Ascending aorta (tissue), 2 donors: ENCODE measurements at regions of chr2 and their contacts with region 1.

Region 1: DNA sequence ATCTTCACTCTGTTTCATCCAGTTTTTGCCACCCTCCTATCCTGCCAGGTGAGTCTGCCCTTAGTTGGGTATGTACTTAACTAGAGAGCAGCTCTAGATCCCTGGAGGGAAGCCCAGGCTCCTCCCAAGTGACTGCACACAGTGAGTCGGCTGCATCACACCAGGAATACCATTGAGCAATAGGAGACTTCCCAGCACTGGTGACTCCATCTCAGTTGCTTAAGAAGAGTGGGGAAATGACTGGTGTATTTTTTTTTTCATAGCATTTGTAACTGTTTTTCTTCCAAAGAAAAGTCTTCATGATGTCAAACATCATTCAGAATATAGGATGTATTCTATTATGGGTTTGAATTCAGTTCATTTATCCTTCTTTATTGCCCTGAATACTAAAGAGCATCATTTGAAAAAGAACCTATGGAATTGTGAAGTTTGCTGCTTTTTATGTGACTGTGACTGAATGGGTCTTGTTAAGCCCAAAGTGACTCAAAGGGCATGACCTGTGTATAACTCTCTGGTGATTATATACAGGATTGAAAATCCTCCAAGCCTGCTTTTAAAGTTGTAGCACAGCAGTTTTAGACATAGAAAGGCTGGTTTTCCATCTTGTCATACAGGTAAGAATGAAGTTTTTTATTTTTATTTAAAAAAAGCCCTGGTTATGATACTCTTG is 84.3 kb downstream of the MAP3K20 start:
- DNase-seq: peak; percentile 90 to 98
- H3K4me3 ChIP-seq: no peak overlapping the region
- H3K27ac ChIP-seq: peak overlapping the region; percentile 62 to 79
- H3K4me1 ChIP-seq: peaks cover 6 to 14% of the 10 kb centered on the region in 2 donors
- H3K27me3 ChIP-seq: no peaks in the 10 kb centered on the region
- CTCF ChIP-seq: no peak

Region 2: GRCh38 chr2:173027181-173028128 is 132.5 kb before region 1 on chr2:
- intact Hi-C with region 1: loop called (anchors 1 kb)
- DNase-seq: peak; percentile 53 to 95
- H3K4me3 ChIP-seq: no peak overlapping the region
- H3K27ac ChIP-seq: peak overlapping the region; percentile 65 to 70
- H3K4me1 ChIP-seq: peaks cover 0 to 8% of the 10 kb centered on the region in 2 donors
- H3K27me3 ChIP-seq: no peaks in the 10 kb centered on the region
- CTCF ChIP-seq: peak; percentile 90 to 94 (median 93)

Region 3: DNA sequence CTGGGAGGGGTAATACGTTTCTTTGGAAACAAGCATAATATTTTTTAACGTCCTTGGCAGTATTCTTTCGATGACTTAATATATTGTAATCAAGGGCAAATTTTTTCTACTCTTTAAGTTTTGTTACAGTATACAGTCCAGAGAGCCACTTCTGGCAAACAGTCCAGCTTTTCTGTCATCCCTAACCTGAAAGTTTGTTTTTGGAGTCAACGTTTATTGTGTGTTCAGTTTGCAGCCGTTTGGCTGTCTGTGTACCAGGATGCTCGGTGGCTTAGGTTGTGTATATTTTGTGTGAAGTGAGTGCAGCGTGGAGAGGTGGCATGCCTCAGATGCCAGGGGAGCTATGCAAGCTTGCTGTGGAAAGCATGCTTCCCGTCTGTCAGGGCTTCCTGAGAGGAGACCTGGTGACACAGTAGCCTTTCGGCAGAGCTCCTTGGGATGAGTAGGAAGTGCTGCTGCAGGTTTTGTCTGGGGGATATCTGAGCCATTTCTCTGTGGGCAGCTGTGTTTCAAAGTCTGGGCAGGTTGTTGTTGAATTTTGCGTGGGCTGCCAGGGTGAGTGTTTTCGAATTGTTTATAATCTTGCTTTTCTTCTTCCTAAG is 69.6 kb before region 1 on chr2:
- intact Hi-C with region 1: loop called (anchors 5 kb)
- DNase-seq: no peak
- H3K4me3 ChIP-seq: peak overlapping the region; percentile 18 to 47
- H3K27ac ChIP-seq: peak overlapping the region; percentile 67 to 72
- H3K4me1 ChIP-seq: peaks cover 0 to 19% of the 10 kb centered on the region in 2 donors
- H3K27me3 ChIP-seq: no peaks in the 10 kb centered on the region
- CTCF ChIP-seq: no peak

Region 4: GRCh38 chr2:173184031-173185004 is 24.4 kb after region 1 on chr2:
- intact Hi-C with region 1: loop called (anchors 2 kb)
- DNase-seq: peak; percentile 13 to 89
- H3K4me3 ChIP-seq: no peak overlapping the region
- H3K27ac ChIP-seq: peak overlapping the region; percentile 84 to 94
- H3K4me1 ChIP-seq: peaks cover 16 to 40% of the 10 kb centered on the region in 2 donors
- H3K27me3 ChIP-seq: no peaks in the 10 kb centered on the region
- CTCF ChIP-seq: no peak

Region 5: GRCh38 chr2:173199294-173199693 is 39.4 kb after region 1 on chr2:
- intact Hi-C with region 1: loop called (anchors 5 kb)
- DNase-seq: no peak
- H3K4me3 ChIP-seq: no peak overlapping the region
- H3K27ac ChIP-seq: peak overlapping the region; percentile 48 to 59
- H3K4me1 ChIP-seq: peaks cover 6 to 52% of the 10 kb centered on the region in 2 donors
- H3K27me3 ChIP-seq: no peaks in the 10 kb centered on the region
- CTCF ChIP-seq: no peak